ENCODE measurements at regions of chr17 and their contacts with region 1.

Region 1: GRCh38 chr17:36705874-36706731 is 104.7 kb downstream of the MRM1 start:
- DNase-seq: peak; percentile 86
- H3K4me3 ChIP-seq: no peak overlapping the region
- H3K27ac ChIP-seq: no peak overlapping the region
- H3K4me1 ChIP-seq: peaks cover 0 to 2% of the 10 kb centered on the region in 2 experiments; a peak in 1 of 4 replicates
- H3K27me3 ChIP-seq: no peaks in the 10 kb centered on the region; the same call in 1 of the 2 replicates
- CTCF ChIP-seq: peak; percentile 67
- EP300 ChIP-seq: no peak
- RAD21 ChIP-seq: peak; percentile 87

Region 2: GRCh38 chr17:36608794-36609497 is 97.2 kb before region 1 on chr17:
- CTCF ChIA-PET with region 1: no interaction called
- POLR2A ChIA-PET with region 1: no interaction called
- DNase-seq: no peak
- H3K4me3 ChIP-seq: no peak overlapping the region; a peak in 1 of 4 replicates
- H3K27ac ChIP-seq: no peak overlapping the region
- H3K4me1 ChIP-seq: peaks cover 0 to 2% of the 10 kb centered on the region in 2 experiments; a peak in 1 of 4 replicates
- H3K27me3 ChIP-seq: no peaks in the 10 kb centered on the region
- CTCF ChIP-seq: no peak
- EP300 ChIP-seq: no peak
- RAD21 ChIP-seq: peak; percentile 37

Region 3: DNA sequence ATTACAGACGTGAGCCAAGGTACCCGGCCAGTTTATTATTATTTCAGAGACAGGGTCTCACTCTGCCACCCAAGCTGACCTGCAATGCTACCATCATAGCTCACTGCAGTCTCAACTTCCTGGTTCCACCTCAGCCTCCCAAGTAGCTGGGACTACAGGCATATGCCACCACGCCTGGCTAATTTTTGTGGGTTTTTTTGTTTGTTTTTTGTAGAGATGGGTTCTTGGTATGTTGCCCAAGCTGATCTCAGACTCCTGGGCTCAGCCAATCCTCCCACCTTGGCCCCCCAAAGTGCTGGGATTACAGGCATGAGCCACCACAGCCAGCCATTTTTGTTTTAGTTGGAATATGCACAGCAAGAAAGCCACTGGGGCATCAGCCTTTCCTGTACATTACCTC is 11.0 kb after region 1 on chr17:
- CTCF ChIA-PET with region 1: interaction called, 16 read pairs
- POLR2A ChIA-PET with region 1: no interaction called
- DNase-seq: no peak
- H3K4me3 ChIP-seq: no peak overlapping the region
- H3K27ac ChIP-seq: no peak overlapping the region
- H3K4me1 ChIP-seq: peaks cover 0 to 26% of the 10 kb centered on the region in 2 experiments; a peak in 2 of 4 replicates
- H3K27me3 ChIP-seq: peaks cover 8% of the 10 kb centered on the region; the same call in 1 of the 2 replicates
- CTCF ChIP-seq: no peak
- EP300 ChIP-seq: no peak
- RAD21 ChIP-seq: no peak

Region 4: DNA sequence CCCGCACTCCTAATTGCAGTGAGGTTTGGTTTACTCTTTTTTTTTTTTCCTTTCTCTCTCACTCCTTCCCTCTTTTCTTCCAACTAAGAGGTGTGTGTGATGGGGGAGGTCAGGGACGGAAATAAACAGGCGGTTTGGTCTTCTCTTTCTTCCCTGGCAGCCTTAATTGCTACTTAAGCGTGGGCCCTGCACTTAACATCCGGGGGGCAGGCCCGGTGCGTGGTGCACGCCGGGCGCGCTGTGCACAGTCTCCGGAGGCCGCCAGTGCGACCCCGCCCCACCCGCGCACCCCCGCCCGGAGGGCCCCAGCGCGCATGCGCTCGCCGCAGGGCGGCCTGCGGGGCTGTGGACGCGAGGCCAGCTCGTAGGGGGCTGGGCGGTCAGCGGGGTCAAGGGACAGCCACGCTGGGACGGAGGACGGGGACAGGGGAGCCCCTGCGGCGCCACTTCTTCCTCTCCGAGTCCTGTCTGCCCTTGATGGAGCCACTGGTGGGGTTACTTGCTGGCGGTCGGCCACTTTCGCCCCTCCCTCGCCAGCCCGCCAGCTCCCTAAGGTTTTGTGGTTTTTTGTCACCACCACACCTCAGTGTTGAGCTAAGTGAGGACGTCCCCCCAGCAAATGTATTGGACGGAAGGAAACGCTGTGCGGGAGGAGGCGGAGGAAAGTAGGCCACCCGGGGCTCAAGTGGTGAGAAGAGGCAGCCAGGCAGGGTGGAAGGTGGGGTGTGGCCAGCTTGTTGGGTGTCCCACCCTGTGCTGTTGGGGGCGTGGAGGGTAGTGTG is 16.2 kb after region 1 on chr17:
- CTCF ChIA-PET with region 1: interaction called, 16 read pairs
- POLR2A ChIA-PET with region 1: no interaction called
- DNase-seq: no peak
- H3K4me3 ChIP-seq: no peak overlapping the region
- H3K27ac ChIP-seq: peak overlapping the region in 1 of 2 experiments; percentile 22; a peak in 1 of 4 replicates
- H3K4me1 ChIP-seq: peaks cover 0 to 44% of the 10 kb centered on the region in 2 experiments; a peak in 2 of 4 replicates
- H3K27me3 ChIP-seq: peaks cover 24% of the 10 kb centered on the region; the same call in 1 of the 2 replicates
- CTCF ChIP-seq: no peak
- EP300 ChIP-seq: no peak
- RAD21 ChIP-seq: no peak

Region 5: GRCh38 chr17:36728030-36728991 is 22.2 kb after region 1 on chr17:
- CTCF ChIA-PET with region 1: interaction called, 14 read pairs
- POLR2A ChIA-PET with region 1: no interaction called
- DNase-seq: peak; percentile 85
- H3K4me3 ChIP-seq: no peak overlapping the region; a peak in 1 of 4 replicates
- H3K27ac ChIP-seq: peak overlapping the region in 1 of 2 experiments; percentile 100; a peak in 2 of 4 replicates
- H3K4me1 ChIP-seq: peaks cover 0 to 66% of the 10 kb centered on the region in 2 experiments; a peak in 2 of 4 replicates
- H3K27me3 ChIP-seq: peaks cover 55% of the 10 kb centered on the region
- CTCF ChIP-seq: no peak
- EP300 ChIP-seq: peak in 1 of 2 experiments; percentile 94; a peak in 2 of 4 replicates
- RAD21 ChIP-seq: peak; percentile 42

Region 6: DNA sequence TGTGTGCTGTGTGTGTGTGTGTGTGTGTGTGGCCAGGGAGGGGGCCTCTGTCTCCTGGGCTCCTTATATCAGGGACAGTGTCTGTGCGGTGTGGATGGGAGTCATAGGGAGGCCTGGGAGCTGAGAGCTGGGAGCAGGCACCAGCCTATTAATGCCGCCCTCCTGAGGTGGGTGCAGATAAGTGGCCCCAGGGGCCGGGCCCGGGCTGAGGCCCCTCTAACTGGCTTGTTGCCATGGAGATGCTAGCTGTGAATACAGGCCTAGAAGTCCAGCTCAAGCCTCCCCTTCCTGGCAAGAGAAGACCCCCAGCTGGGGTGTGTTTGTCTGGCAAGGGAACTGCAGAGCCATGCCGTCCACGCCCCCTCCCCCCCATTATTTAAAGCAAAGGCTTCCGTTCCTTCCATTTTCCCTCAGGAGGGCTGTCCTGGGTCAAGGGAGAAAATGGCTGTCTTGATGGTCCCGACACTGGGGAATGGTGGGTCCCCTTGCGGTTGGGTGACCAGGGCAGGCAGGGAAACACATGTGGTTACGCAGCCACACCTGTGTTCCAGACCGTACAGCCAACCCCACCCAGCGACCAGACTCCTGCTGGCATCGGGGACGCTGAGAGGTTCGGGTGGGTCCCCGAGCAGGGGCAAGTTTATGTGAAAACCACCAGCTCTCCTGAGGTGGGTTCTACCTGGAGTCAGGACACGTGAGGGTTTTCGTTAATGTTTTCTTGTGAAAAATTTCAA is 36.3 kb after region 1 on chr17:
- CTCF ChIA-PET with region 1: interaction called, 12 read pairs
- POLR2A ChIA-PET with region 1: no interaction called
- DNase-seq: no peak
- H3K4me3 ChIP-seq: no peak overlapping the region
- H3K27ac ChIP-seq: no peak overlapping the region
- H3K4me1 ChIP-seq: peaks cover 0 to 24% of the 10 kb centered on the region in 2 experiments; a peak in 1 of 4 replicates
- H3K27me3 ChIP-seq: no peaks in the 10 kb centered on the region
- CTCF ChIP-seq: no peak
- EP300 ChIP-seq: no peak
- RAD21 ChIP-seq: no peak

Region 7: DNA sequence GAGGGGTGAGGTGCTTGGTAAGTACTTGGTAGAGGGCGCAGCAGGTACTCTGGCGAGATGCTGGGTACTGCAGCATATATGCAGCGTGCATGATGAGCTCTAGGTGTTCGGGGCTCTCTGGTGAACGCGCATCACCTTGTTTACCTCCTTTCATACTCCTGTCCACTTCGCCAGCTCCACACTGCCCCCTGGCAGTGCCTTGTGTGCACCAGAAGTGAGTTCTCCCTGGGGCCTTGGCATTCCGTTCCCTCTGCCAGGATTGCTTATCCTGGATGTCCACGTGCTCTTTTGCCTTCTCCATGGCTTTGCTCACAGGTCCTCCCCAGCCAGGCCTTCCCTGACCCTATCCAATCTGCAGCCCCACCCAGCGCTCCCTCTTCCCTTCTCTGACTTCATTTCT is 49.5 kb after region 1 on chr17:
- CTCF ChIA-PET with region 1: interaction called, 15 read pairs
- POLR2A ChIA-PET with region 1: no interaction called
- DNase-seq: peak; percentile 68
- H3K4me3 ChIP-seq: no peak overlapping the region
- H3K27ac ChIP-seq: no peak overlapping the region
- H3K4me1 ChIP-seq: no peaks in the 10 kb centered on the region; a peak in 1 of 4 replicates
- H3K27me3 ChIP-seq: no peaks in the 10 kb centered on the region
- CTCF ChIP-seq: peak; percentile 24; the same call in 1 of the 2 replicates
- EP300 ChIP-seq: no peak
- RAD21 ChIP-seq: peak; percentile 75